Pancreas (tissue), 10 donors: ENCODE measurements at regions of chr13 and their contacts with region 1.

Region 1: GRCh38 chr13:24355103-24355502 is 45.7 kb downstream of the C1QTNF9 start:
- DNase-seq: no peak
- ATAC-seq: no peak
- H3K4me3 ChIP-seq: no peak overlapping the region
- H3K27ac ChIP-seq: no peak overlapping the region
- H3K4me1 ChIP-seq: no peaks in the 10 kb centered on the region
- H3K27me3 ChIP-seq: no peaks in the 10 kb centered on the region
- CTCF ChIP-seq: no peak

Region 2: GRCh38 chr13:22929381-22930126 is 1425.5 kb before region 1 on chr13:
- intact Hi-C with region 1: loop called in 2 of 3 experiments (anchors 5 to 10 kb)
- DNase-seq: no peak
- ATAC-seq: no peak
- H3K4me3 ChIP-seq: no peak overlapping the region
- H3K27ac ChIP-seq: no peak overlapping the region
- H3K4me1 ChIP-seq: no peaks in the 10 kb centered on the region
- H3K27me3 ChIP-seq: no peaks in the 10 kb centered on the region
- CTCF ChIP-seq: no peak